Dorsolateral prefrontal cortex (tissue), 120 donors: ENCODE measurements at regions of chr10 and their contacts with region 1.

Region 1: GRCh38 chr10:124647421-124648130 is 96.6 kb downstream of the FAM53B start:
- DNase-seq: peak in 1 of 10 donors; percentile 68
- H3K4me3 ChIP-seq: peak overlapping the region in 1 of 59 donors; percentile 27
- H3K27ac ChIP-seq: peak overlapping the region; percentile 79 to 99 (median 95)
- H3K27me3 ChIP-seq: no peaks in the 10 kb centered on the region
- CTCF ChIP-seq: peak in 37 of 56 donors; percentile 11 to 48 (median 29)

Region 2: GRCh38 chr10:124701435-124701834 is 53.9 kb after region 1 on chr10:
- intact Hi-C with region 1: loop called in 1 of 2 experiments (anchors 5 kb)
- DNase-seq: peak in 2 of 10 donors; percentile 57 to 75
- H3K4me3 ChIP-seq: peak overlapping the region in 2 of 59 donors; percentile 14 to 18
- H3K27ac ChIP-seq: peak overlapping the region; percentile 72 to 100 (median 97)
- H3K27me3 ChIP-seq: no peaks in the 10 kb centered on the region
- CTCF ChIP-seq: peak in 5 of 56 donors; percentile 4 to 26 (median 15)